ENCODE measurements at regions of chr2 and their contacts with region 1.

Region 1: DNA sequence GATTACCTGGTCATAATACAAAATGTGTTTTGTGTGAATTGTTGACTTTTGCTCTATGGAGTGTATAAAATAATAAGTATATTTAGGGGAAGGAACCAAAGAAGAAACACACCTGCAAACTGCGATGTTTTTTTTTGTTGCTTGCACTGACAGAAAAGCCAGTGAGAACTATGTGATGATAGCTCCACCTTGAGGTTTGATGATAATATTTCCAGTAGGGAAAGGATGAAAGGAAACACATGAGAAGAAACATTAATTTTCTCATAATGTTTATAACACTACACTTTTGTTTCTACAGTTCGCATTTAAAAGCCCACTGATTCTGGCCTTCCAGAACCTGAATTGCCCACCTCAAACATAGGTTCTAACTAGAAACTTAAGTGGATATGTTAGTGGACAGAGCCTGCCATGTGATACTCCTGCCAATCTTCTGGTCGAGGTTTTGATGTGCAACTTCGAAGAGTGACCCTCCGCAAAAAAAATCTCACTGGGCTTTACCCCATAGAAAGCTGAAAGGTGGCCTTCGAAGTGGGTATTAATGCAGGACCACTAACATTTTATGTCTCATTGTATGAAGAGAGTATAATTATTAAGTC is 476.4 kb upstream of the SPHKAP start:
- DNase-seq: no peak
- H3K4me3 ChIP-seq: no peak overlapping the region
- H3K27ac ChIP-seq: no peak overlapping the region
- H3K4me1 ChIP-seq: no peaks in the 10 kb centered on the region
- H3K27me3 ChIP-seq: no peaks in the 10 kb centered on the region
- CTCF ChIP-seq: peak in 6 of 11 experiments; percentile 14 to 37 (median 22)
- POLR2A ChIP-seq: no peak

Region 2: DNA sequence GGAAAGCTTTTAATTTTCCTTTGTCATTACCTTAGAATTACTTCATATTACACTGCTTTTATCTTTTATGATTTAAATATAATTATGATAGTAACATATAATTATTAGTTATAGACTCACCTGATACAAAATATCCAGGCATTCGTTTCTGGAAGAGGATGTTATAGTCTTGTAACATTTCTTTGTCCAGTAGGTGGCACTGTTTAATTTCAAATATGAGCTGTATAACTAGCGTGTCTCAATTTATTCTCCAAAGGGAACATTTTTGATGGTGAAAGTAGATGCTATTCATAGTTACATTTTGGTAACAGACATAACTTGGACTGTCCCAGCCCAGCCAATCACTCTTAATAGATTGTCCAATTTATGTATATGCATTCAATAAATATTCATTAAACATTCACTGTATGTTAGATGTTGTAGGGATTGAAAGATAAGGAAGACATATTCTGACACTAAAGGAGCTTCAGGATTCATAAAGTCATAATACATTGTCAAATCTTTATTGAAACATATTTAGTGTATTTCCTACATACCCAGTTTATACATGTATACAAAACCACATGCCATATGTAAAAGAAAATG is 767.3 kb before region 1 on chr2:
- intact Hi-C with region 1: loop called (anchors 10 kb)
- DNase-seq: no peak
- H3K4me3 ChIP-seq: no peak overlapping the region
- H3K27ac ChIP-seq: no peak overlapping the region
- H3K4me1 ChIP-seq: no peaks in the 10 kb centered on the region
- H3K27me3 ChIP-seq: no peaks in the 10 kb centered on the region
- CTCF ChIP-seq: peak in 9 of 11 experiments; percentile 28 to 68 (median 60)
- POLR2A ChIP-seq: no peak

Region 3: GRCh38 chr2:228048838-228049490 is 608.9 kb before region 1 on chr2:
- intact Hi-C with region 1: loop called (anchors 5 kb)
- DNase-seq: no peak
- H3K4me3 ChIP-seq: no peak overlapping the region
- H3K27ac ChIP-seq: no peak overlapping the region
- H3K4me1 ChIP-seq: no peaks in the 10 kb centered on the region
- H3K27me3 ChIP-seq: no peaks in the 10 kb centered on the region
- CTCF ChIP-seq: peak in 6 of 11 experiments; percentile 17 to 62 (median 38)
- POLR2A ChIP-seq: no peak